Activated CD8-positive, alpha-beta memory T cell treated with anti-CD3 and anti-CD28 coated beads, Interleukin-2, amount 10 ng/mL, durations not matched to agents 7 days and 5 days (primary cell): ENCODE measurements at regions of chr14 and their contacts with region 1.

Region 1: DNA sequence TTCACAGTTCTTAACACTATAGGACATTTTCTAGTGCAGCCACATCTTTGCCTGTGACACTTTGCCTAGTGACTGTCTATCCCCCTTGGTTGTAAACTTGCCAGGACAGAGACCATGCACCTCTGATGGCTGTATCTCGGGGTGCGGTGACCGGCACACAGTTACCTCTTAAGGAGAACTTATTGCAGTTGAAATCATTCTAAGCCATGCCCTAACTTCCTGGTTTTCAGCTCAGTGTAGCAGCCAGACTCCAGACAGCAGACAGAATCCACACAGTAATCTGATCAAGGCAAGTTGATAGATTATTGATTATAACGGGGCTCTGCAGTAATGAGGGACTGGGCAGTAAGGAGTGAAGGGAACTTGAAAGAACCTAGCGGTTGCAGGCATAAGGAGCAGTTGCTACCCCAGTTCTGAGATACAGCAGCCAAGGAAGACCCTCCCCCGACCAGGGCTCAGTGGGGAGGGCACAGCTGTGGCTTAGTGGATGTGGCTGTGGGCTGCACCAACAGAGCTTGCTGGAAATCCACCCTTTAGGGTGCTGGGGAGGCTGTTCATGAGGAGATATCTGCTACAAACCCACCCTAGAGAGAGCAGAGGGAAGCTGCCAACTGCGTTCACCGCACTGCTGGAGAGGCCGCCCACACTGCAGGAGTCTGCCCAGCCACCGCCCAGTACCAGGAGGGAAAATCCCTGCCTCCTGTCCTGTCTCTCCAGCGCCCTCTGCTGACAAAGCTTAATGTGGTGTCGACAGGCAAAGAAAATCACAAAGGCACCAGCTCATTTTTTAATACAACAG is 58.2 kb upstream of the BEGAIN start:
- DNase-seq: peak; percentile 94
- ATAC-seq: peak; percentile 82
- H3K4me3 Mint-ChIP-seq: peak overlapping the region; percentile 20
- H3K27ac Mint-ChIP-seq: peak overlapping the region; percentile 83
- H3K4me1 Mint-ChIP-seq: peaks cover 64% of the 10 kb centered on the region
- H3K27me3 Mint-ChIP-seq: peaks cover 9% of the 10 kb centered on the region

Region 2: DNA sequence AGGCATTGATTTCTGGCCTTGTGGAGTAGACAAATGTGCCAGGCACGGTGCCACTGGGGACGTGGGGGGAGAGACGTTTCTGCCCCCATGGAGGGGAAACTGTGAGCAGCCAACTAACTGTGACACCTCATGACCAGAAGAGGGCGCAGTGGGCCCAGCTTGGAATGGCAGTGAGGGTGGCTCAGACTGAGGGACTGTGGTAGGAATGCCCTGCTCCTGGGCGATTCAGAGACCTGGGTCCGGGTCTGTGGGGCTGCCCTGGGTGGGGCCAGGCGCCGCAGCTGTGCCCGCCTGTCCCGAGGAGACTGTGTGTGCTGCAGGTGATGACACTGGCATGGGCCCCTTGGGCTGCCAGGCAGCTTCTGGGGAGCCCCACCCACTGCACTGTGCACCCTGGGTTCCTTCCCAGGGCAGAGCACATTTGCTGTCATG is 261.6 kb before region 1 on chr14:
- CTCF ChIA-PET with region 1: interaction called, 177 read pairs
- DNase-seq: peak; percentile 77
- ATAC-seq: peak; percentile 88
- H3K4me3 Mint-ChIP-seq: no peak overlapping the region
- H3K27ac Mint-ChIP-seq: no peak overlapping the region
- H3K4me1 Mint-ChIP-seq: peaks cover 6% of the 10 kb centered on the region
- H3K27me3 Mint-ChIP-seq: no peaks in the 10 kb centered on the region

Region 3: DNA sequence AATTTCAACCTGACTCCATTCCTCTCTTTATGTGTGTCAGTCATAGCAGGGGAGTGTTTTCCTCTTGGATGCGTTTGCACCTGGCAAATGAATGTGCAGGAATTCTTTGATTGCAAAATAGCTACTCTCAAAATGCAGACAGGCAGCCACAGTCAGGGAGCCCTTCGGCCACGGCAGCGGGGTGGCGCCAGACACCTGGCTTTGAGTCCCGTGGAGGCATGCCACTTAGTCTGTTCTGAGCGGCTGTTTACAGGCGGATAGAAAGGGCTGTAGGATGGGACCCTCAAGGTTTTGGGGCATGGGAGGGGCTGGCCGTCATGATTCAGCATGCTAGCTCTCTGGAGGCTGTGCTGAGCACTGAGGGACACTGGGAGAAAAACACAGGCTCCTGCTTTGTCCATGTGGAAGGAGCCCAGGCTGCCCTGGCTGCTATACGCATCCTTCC is 205.2 kb before region 1 on chr14:
- CTCF ChIA-PET with region 1: interaction called, 45 read pairs
- DNase-seq: peak; percentile 66
- ATAC-seq: peak; percentile 68
- H3K4me3 Mint-ChIP-seq: no peak overlapping the region
- H3K27ac Mint-ChIP-seq: no peak overlapping the region
- H3K4me1 Mint-ChIP-seq: peaks cover 28% of the 10 kb centered on the region
- H3K27me3 Mint-ChIP-seq: no peaks in the 10 kb centered on the region

Region 4: DNA sequence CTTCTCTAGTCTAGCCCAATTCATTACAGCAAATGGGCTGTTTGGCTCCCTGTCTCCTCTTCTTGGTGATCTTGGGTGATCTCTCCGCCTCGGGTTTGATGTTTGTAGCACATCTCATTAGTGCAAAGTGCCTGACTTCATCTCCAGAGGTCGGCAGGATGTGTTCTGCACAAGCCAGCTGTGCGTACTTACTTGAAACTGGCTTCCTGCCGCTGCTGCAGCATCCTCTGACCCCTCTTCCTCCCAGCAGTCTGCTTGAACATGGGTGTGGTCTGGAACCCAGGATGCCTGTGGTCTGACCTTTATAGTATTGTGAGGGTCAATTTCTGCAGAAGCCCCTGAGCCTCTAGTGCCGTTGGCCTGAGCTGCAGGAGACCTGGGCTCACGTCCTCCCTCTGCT is 157.3 kb before region 1 on chr14:
- CTCF ChIA-PET with region 1: interaction called, 10 read pairs
- DNase-seq: peak; percentile 83
- ATAC-seq: peak; percentile 69
- H3K4me3 Mint-ChIP-seq: peak overlapping the region; percentile 18
- H3K27ac Mint-ChIP-seq: peak overlapping the region; percentile 67
- H3K4me1 Mint-ChIP-seq: peaks cover 43% of the 10 kb centered on the region
- H3K27me3 Mint-ChIP-seq: no peaks in the 10 kb centered on the region

Region 5: DNA sequence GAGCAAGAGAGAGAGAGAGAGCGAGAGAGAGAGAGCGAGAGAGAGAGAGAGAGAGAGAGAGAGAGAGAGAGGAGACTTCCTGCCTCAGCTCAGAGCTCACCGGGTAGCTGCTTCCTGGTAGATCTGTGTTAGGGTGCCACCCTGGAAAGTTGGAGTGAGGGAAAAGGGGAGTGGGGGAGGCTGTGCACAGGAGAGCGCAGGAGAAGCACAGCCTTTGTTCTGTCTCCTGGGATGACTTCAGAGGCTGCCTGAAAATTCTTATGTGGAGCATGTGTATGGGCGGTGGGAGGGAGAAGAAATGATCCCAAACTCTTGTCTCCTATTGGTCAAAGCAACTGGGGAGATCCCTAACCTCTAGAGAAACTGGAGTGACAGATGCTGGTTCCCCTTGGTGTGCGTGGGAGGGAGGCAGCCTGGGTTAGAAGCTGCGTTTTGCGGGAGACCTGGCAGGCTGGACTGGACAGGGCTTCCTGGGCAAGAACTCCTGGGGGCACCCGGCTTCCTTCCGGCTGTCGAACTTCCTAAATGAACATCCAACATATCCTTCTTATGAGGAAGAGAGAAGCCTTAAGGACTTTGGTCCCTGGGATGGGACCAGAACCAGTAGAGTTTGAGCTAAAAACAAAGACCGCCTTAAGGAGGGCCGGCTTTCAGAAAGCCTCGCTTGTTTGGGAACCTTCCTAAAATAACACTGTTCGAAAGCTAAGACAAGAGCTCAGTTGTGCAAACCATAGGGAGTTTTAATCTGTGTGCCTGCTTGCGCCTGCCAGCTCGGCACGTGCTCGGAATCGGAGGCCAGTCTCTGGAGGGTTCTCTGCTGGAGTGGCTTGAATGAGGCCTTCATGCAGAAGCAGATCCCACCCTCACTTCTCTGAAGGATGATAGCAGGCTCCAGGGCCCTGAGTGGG is 27.7 kb before region 1 on chr14:
- CTCF ChIA-PET with region 1: interaction called, 36 read pairs
- DNase-seq: no peak
- ATAC-seq: peak; percentile 42
- H3K4me3 Mint-ChIP-seq: no peak overlapping the region
- H3K27ac Mint-ChIP-seq: peak overlapping the region; percentile 10
- H3K4me1 Mint-ChIP-seq: peaks cover 10% of the 10 kb centered on the region
- H3K27me3 Mint-ChIP-seq: peaks cover 18% of the 10 kb centered on the region

Region 6: GRCh38 chr14:100634026-100634425 is 11.4 kb before region 1 on chr14:
- CTCF ChIA-PET with region 1: interaction called, 33 read pairs
- DNase-seq: no peak
- ATAC-seq: no peak
- H3K4me3 Mint-ChIP-seq: no peak overlapping the region
- H3K27ac Mint-ChIP-seq: no peak overlapping the region
- H3K4me1 Mint-ChIP-seq: peaks cover 5% of the 10 kb centered on the region
- H3K27me3 Mint-ChIP-seq: peaks cover 34% of the 10 kb centered on the region

Region 7: GRCh38 chr14:100709289-100710284 is 64.2 kb after region 1 on chr14:
- CTCF ChIA-PET with region 1: no interaction called
- DNase-seq: no peak
- ATAC-seq: no peak
- H3K4me3 Mint-ChIP-seq: no peak overlapping the region
- H3K27ac Mint-ChIP-seq: no peak overlapping the region
- H3K4me1 Mint-ChIP-seq: no peaks in the 10 kb centered on the region
- H3K27me3 Mint-ChIP-seq: peaks cover 15% of the 10 kb centered on the region

Region 8: DNA sequence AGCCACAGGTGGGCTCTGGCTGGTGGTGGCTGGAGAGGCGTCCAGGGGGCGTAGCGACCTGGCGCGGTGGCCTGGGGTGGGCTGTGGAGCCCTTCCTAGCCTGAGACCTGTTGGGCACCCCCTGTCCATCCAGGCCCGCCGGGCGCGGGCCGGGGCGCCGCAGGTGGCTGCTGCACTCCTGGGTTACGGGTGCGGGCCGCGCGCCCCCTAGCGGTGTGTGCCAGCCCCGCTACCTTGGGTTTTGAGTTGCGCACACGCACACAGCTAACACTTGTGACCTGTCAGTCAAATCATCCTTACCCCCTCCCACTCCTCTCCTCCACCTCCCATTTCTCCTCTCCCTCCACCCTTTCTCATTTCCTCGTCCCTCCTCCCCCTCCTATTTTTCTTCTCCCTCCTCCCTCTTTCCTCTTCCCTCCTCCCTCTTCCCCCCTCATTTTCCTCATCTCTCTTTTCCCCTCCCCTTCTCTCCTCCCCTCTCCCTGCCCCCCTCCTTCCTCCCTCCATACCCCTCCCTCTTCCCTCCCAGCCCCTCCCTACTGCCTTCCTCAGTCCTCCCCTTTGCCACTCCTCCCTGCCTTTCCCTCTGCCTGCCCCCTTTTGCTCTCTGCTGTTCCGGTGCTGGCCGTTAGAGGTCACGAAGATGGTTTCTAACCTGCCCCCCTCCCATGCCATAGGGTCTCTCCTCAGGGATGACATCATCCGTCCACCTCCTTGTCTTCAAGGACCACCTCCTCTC is 182.8 kb after region 1 on chr14:
- CTCF ChIA-PET with region 1: no interaction called
- DNase-seq: no peak
- ATAC-seq: no peak
- H3K4me3 Mint-ChIP-seq: no peak overlapping the region
- H3K27ac Mint-ChIP-seq: no peak overlapping the region
- H3K4me1 Mint-ChIP-seq: no peaks in the 10 kb centered on the region
- H3K27me3 Mint-ChIP-seq: peaks cover 36% of the 10 kb centered on the region